Spleen (tissue), 13 donors: ENCODE measurements at regions of chr1 and their contacts with region 1.

Region 1: DNA sequence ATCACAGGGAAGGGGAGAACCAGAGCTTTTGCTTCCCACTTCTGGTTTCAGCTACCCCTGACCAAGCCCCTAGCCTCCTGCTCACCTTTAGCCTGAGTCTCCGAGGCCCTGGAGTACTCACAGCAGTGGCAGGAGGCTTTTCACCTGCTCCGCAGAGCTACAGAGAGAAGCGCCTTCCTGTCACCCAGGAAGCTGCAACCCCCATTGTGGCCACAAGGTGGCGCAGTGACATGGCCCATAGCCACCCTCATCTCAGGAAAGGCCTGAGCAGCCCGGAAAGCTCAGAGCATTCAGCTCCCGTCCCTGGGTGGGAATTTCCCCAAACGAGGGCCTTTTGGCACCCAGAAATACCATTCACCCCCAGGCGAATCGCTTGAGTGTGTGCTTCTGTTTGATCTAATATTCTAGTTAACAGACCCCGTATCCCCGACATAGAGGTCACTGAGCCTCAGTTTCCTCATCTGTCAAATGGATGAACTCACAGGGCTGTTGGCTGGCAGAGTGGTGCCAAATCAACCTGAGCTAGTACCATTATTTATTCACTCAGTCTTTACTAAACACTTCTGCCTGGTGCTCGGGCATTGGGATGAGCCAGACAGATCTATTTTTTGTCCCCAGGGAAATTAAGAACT is 25.3 kb downstream of the A3GALT2 start:
- DNase-seq: peak; percentile 96
- H3K4me3 ChIP-seq: no peak overlapping the region
- H3K27ac ChIP-seq: peak overlapping the region in 5 of 8 donors; percentile 5 to 49 (median 40)
- H3K4me1 ChIP-seq: peaks cover 0 to 44% (median 25%) of the 10 kb centered on the region in 6 donors
- H3K27me3 ChIP-seq: no peaks in the 10 kb centered on the region
- CTCF ChIP-seq: peak; percentile 94 to 100 (median 98)
- POLR2A ChIP-seq: no peak

Region 2: GRCh38 chr1:33228935-33229487 is 66.6 kb before region 1 on chr1:
- intact Hi-C with region 1: no loop called
- DNase-seq: no peak
- H3K4me3 ChIP-seq: no peak overlapping the region
- H3K27ac ChIP-seq: peak overlapping the region in 5 of 8 donors; percentile 32 to 61 (median 55)
- H3K4me1 ChIP-seq: peaks cover 0 to 6% (median 2%) of the 10 kb centered on the region in 6 donors
- H3K27me3 ChIP-seq: peaks cover 0 to 40% (median 0%) of the 10 kb centered on the region in 7 donors
- CTCF ChIP-seq: no peak
- POLR2A ChIP-seq: no peak

Region 3: DNA sequence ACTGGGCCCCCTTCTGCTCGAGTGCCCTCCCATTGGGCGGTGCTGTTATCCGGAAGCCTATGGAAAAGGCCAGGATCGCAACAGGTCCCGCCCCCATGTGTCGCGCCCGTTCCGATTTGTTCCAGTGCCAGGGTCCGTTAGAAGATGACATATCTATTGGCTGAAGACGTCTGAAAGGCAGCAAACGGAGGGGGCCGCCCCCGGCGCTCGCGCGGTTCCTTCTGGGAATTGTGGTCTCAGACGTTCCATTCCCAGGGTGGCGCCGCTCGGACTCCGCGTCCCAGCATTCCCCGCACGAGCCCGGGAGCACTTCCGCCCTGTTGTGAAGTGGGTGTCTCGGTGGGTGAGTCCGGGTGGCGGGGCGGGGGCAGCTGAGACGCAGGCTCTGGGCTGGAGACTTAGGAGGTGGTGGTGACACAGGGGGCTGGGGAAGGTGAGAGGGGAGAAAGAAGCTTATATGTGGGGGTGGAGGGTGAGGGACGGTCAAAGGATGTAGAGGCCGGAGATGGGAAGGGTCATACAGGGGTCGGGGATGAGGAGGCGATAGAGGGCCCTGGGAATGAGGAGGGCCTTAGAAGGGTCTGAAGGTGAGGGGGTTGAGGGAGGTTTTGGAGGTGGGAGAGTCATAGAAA is 176.9 kb after region 1 on chr1 and contains the start of gene ZSCAN20:
- intact Hi-C with region 1: loop called (anchors 5 kb)
- DNase-seq: peak; percentile 96
- H3K4me3 ChIP-seq: peak within 1 kb of the TSS; percentile 29 to 74 (median 45)
- H3K27ac ChIP-seq: peak within 1 kb of the TSS; percentile 48 to 82 (median 76)
- H3K4me1 ChIP-seq: peaks cover 18 to 57% (median 35%) of the 10 kb centered on the region in 6 donors
- H3K27me3 ChIP-seq: no peaks in the 10 kb centered on the region
- CTCF ChIP-seq: peak in 2 of 11 experiments; percentile 8 to 18
- POLR2A ChIP-seq: no peak
- total RNA-seq, gene ZSCAN20: 3.4 to 6.2 (median 4.5) TPM